T-cell (primary cell): ENCODE measurements at regions of chr16 and their contacts with region 1.

Region 1: DNA sequence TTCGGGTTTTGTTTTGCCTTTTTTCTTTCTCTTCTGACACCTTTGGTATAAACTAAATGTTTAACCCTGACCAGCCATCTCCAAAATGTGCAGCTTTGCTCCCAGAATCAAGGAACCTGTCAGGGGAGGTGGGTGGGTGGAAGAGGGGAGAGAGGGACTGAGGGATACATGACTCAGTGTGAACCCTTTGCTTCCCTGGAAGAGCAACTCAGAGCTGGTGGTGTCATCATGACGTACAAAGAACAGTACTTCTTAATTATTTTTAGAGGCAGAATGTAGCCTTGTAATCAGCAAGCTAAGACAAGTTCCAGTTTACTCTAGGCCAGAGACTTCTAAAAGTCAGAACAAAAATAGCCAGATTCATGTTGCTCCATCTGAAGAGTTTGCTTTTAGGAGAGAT is 119.6 kb upstream of the HAS3 start:
- DNase-seq: no peak
- ATAC-seq: no peak
- H3K4me3 ChIP-seq: no peak overlapping the region
- H3K4me3 Mint-ChIP-seq: no peak overlapping the region
- H3K27ac ChIP-seq: no peak overlapping the region
- H3K27ac Mint-ChIP-seq: no peak overlapping the region
- H3K4me1 ChIP-seq: no peaks in the 10 kb centered on the region
- H3K4me1 Mint-ChIP-seq: no peaks in the 10 kb centered on the region
- H3K27me3 ChIP-seq: no peaks in the 10 kb centered on the region
- H3K27me3 Mint-ChIP-seq: no peaks in the 10 kb centered on the region

Region 2: DNA sequence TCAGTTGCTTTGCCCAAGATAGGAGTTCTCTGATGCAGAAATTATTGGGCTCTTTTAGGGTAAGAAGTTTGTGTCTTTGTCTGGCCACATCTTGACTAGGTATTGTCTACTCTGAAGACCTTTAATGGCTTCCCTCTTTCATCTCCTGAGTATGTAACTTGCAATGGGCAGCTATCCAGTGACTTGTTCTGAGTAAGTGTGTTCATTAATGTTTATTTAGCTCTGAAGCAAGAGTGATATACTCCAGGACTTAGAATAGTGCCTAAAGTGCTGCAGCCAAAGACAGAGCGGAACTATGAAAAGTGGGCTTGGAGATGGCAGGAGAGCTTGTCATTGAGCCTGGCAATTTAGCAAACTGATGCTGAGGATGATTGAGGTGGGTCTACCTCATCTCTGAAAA is 151.3 kb before region 1 on chr16:
- CTCF ChIA-PET with region 1: no interaction called
- POLR2A ChIA-PET with region 1: interaction called in 1 of 2 experiments, 10 read pairs
- DNase-seq: no peak
- ATAC-seq: no peak
- H3K4me3 ChIP-seq: no peak overlapping the region
- H3K4me3 Mint-ChIP-seq: no peak overlapping the region
- H3K27ac ChIP-seq: no peak overlapping the region
- H3K27ac Mint-ChIP-seq: no peak overlapping the region
- H3K4me1 ChIP-seq: no peaks in the 10 kb centered on the region
- H3K4me1 Mint-ChIP-seq: no peaks in the 10 kb centered on the region
- H3K27me3 ChIP-seq: peaks cover 0 to 3% of the 10 kb centered on the region in 2 experiments
- H3K27me3 Mint-ChIP-seq: peaks cover 3 to 4% of the 10 kb centered on the region in 2 donors